ENCODE measurements at regions of chr4 and their contacts with region 1.

Region 1: DNA sequence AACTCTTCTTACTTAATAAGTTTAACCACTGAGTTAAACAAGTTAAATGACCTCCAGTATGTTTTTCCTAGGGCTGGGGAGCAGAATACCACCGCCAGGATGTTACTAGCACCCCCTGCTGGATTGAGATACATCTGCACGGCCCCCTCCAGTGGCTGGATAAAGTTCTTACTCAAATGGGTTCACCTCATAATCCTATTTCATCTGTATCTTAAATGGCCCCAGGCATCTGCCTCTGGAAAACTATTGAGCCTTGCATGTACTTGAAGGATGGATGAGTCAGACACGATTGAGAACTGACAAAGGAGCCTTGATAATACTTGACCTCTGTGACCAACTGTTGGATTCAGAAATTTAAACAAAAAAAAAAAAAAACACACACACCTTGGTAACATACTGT is 61.5 kb upstream of the MMAA start:
- DNase-seq: no peak
- ATAC-seq: peak; percentile 70
- H3K4me3 Mint-ChIP-seq: no peak overlapping the region
- H3K27ac Mint-ChIP-seq: no peak overlapping the region
- H3K4me1 Mint-ChIP-seq: peaks cover 1% of the 10 kb centered on the region
- H3K27me3 Mint-ChIP-seq: peaks cover 7% of the 10 kb centered on the region
- CTCF ChIP-seq: peak; percentile 68

Region 2: GRCh38 chr4:145234091-145234706 is 323.5 kb before region 1 on chr4:
- CTCF ChIA-PET with region 1: interaction called, 12 read pairs
- POLR2A ChIA-PET with region 1: no interaction called
- intact Hi-C with region 1: loop called (anchors 1 kb)
- DNase-seq: no peak
- ATAC-seq: peak; percentile 67
- H3K4me3 Mint-ChIP-seq: no peak overlapping the region
- H3K27ac Mint-ChIP-seq: no peak overlapping the region
- H3K4me1 Mint-ChIP-seq: no peaks in the 10 kb centered on the region
- H3K27me3 Mint-ChIP-seq: no peaks in the 10 kb centered on the region
- CTCF ChIP-seq: no peak

Region 3: DNA sequence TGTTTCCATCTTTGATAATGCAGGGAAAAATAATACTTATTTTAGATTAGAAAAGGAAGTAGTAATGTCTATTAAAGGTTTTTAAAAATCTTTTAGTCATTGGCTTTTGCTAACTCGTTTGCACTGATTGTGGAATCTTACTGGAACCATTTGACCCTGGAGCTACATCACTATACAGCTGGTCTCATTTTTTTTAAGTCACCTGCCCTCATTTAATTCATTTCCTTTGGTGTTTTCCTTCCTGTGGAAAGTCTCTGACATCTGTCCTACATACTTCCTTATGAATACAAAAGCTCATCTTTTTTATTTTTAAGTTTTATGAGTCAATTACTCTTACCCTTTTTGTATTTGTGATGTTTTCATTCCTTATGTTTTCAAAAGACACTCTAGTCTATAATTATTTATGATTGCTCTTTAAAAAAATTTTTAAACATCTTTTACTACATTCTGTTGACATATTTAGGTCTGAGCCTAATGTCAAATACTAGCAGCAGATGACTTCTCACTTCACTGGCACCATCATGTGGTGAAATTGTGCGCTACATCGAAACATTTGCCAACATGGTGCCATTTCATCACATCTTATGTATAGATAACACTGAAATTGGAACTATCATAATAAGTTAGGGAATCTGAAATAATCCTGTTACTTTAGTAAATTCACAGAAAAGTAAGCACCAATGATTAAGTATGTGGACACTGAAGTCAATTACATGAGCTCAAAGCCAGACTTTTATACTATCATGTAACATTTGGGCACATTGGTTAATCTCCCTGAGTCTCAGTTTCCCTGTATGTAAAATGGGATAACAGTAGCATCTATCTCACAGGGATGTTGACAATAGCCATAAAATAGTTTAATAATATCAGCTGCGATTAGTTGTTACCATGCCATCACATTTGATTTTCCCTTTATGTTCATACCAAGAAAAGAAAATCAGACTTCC is 52.0 kb after region 1 on chr4:
- CTCF ChIA-PET with region 1: no interaction called
- POLR2A ChIA-PET with region 1: no interaction called
- intact Hi-C with region 1: loop called (anchors 2 kb)
- DNase-seq: no peak
- ATAC-seq: peak; percentile 65
- H3K4me3 Mint-ChIP-seq: no peak overlapping the region
- H3K27ac Mint-ChIP-seq: no peak overlapping the region
- H3K4me1 Mint-ChIP-seq: no peaks in the 10 kb centered on the region
- H3K27me3 Mint-ChIP-seq: peaks cover 8% of the 10 kb centered on the region
- CTCF ChIP-seq: no peak

Measured in activated B cell treated with CpG ODN at 0.5 μM for 24 hours (primary cell).